Esophagus muscularis mucosa (tissue), 4 donors: ENCODE measurements at regions of chr7 and their contacts with region 1.

Region 1: DNA sequence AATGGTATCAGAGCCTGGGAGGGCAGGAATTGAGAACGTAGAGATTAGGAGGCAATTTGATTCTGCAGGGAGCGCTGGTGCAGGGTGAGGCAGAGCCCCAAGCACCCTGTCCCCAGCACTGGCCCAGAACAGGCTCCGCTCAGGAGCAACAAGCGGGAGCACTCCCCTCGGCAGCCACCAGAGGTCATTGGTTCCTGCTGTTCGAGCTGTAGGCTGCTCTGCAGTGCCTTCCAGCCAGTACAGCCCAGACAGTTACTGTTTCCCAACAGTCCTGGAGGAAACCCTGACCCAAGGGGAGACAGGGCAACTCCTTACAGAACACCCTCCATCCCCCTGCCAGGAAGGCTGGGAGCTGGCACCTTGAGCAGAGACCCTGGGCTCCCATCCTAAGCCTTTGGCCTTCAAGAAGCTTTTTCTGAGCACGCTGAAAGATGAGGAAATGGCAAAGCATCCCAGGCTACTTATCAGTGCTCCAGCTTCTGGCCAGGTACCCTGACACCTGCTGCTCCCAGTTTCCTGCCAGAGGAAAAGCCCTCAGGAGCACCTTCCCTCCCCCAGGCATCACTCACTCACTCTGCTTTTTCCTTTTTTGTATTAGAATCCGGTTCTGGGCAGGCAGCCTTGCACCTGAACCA is 71.2 kb upstream of the EFCAB10 start:
- DNase-seq: no peak
- H3K4me3 ChIP-seq: no peak overlapping the region
- H3K27ac ChIP-seq: no peak overlapping the region
- H3K4me1 ChIP-seq: peaks cover 31 to 48% (median 45%) of the 10 kb centered on the region in 4 donors
- H3K27me3 ChIP-seq: no peaks in the 10 kb centered on the region
- CTCF ChIP-seq: peak; percentile 87 to 98 (median 92)
- EP300 ChIP-seq: no peak
- POLR2A ChIP-seq: no peak

Region 2: GRCh38 chr7:105743351-105744090 is 91.0 kb after region 1 on chr7:
- intact Hi-C with region 1: loop called (anchors 5 kb)
- DNase-seq: no peak
- H3K4me3 ChIP-seq: no peak overlapping the region
- H3K27ac ChIP-seq: peak overlapping the region in 1 of 4 donors; percentile 5
- H3K4me1 ChIP-seq: peaks cover 0 to 23% (median 15%) of the 10 kb centered on the region in 4 donors
- H3K27me3 ChIP-seq: no peaks in the 10 kb centered on the region
- CTCF ChIP-seq: no peak
- EP300 ChIP-seq: no peak
- POLR2A ChIP-seq: no peak

Region 3: DNA sequence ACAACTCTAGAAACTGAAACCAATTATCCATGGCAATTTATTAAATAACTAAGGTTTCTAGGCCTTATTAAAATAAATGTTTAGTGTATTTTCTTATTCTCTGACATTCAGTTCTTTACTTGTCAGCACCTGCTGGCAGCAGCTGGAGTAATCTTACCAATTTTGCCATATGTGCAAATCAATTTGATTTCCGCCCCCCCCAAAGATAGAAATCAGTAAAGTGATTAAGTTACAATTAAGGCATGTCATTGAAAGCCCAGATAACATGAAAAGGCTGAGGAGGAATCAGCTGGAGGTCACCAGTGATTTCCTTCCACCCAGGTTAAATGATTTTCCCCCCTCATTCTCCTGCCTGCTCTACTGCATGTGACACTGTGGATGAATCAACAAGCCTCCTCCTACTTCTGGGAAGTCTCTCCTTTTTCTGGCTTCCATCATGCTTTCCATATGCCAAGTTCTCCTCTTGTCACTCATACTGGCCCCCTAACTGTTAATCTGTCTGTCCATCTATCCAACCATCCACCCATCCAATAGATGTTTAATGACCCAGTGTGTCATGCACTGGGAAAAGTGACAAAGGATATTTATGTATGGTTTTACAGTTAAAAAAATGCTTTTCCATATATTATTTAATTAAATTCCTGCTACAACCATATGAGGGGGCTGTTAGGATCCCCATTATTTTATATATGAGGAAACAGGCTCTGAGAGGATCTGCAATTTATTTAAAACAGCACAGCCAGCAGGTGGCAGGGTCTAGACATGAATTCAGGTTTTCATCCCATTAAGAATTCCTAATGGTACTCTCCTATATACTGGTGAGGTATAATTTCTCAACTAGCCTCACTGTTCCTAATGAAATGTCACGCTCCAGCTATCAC is 107.4 kb after region 1 on chr7:
- intact Hi-C with region 1: loop called (anchors 5 kb)
- DNase-seq: no peak
- H3K4me3 ChIP-seq: no peak overlapping the region
- H3K27ac ChIP-seq: no peak overlapping the region
- H3K4me1 ChIP-seq: peaks cover 0 to 16% (median 9%) of the 10 kb centered on the region in 4 donors
- H3K27me3 ChIP-seq: no peaks in the 10 kb centered on the region
- CTCF ChIP-seq: peak; percentile 59 to 61 (median 60)
- EP300 ChIP-seq: no peak
- POLR2A ChIP-seq: no peak

Region 4: DNA sequence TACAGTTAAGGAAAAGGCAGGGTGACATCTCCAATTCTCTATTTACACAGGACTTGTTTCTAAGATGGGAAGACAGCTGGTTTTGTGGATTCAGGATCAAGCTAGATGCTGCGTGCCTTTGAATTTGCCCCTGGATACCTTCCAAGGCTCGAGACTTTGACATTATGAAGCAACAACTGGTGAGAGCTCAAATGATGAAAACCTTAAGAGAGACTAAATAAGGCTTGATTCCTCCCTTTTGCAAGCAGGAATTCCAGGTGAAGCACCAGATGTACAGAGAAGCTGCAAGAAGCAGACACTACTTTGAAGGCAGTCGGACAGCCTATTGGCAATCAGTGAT is 142.9 kb after region 1 on chr7:
- intact Hi-C with region 1: no loop called
- DNase-seq: no peak
- H3K4me3 ChIP-seq: peak overlapping the region in 1 of 4 donors; percentile 22
- H3K27ac ChIP-seq: peak overlapping the region; percentile 69 to 82 (median 80)
- H3K4me1 ChIP-seq: peaks cover 21 to 48% (median 40%) of the 10 kb centered on the region in 4 donors
- H3K27me3 ChIP-seq: no peaks in the 10 kb centered on the region
- CTCF ChIP-seq: no peak
- EP300 ChIP-seq: no peak
- POLR2A ChIP-seq: no peak

Region 5: GRCh38 chr7:105876091-105876963 is 223.9 kb after region 1 on chr7 and contains the start of gene ATXN7L1:
- intact Hi-C with region 1: loop called (anchors 5 kb)
- DNase-seq: peak; percentile 97
- H3K4me3 ChIP-seq: peak within 1 kb of the TSS; percentile 66 to 84 (median 82)
- H3K27ac ChIP-seq: peak within 1 kb of the TSS; percentile 85 to 93 (median 88)
- H3K4me1 ChIP-seq: peaks cover 18 to 65% (median 44%) of the 10 kb centered on the region in 4 donors
- H3K27me3 ChIP-seq: no peaks in the 10 kb centered on the region
- CTCF ChIP-seq: peak; percentile 45 to 80 (median 75)
- EP300 ChIP-seq: peak; percentile 35
- POLR2A ChIP-seq: peak; percentile 34
- total RNA-seq, gene ATXN7L1: 4.6 to 12.5 (median 10.1) TPM

Region 6: GRCh38 chr7:106009403-106010226 is 357.1 kb after region 1 on chr7:
- intact Hi-C with region 1: loop called (anchors 10 kb)
- DNase-seq: peak; percentile 95
- H3K4me3 ChIP-seq: peak overlapping the region; percentile 12 to 46 (median 26)
- H3K27ac ChIP-seq: peak overlapping the region; percentile 69 to 84 (median 78)
- H3K4me1 ChIP-seq: peaks cover 7 to 50% (median 42%) of the 10 kb centered on the region in 4 donors
- H3K27me3 ChIP-seq: no peaks in the 10 kb centered on the region
- CTCF ChIP-seq: peak; percentile 95 to 99 (median 98)
- EP300 ChIP-seq: no peak
- POLR2A ChIP-seq: no peak

Region 7: GRCh38 chr7:106041140-106041717 is 388.8 kb after region 1 on chr7:
- intact Hi-C with region 1: loop called (anchors 2 kb)
- DNase-seq: no peak
- H3K4me3 ChIP-seq: no peak overlapping the region
- H3K27ac ChIP-seq: no peak overlapping the region
- H3K4me1 ChIP-seq: peaks cover 2 to 21% (median 16%) of the 10 kb centered on the region in 4 donors
- H3K27me3 ChIP-seq: no peaks in the 10 kb centered on the region
- CTCF ChIP-seq: peak; percentile 44 to 72 (median 49)
- EP300 ChIP-seq: no peak
- POLR2A ChIP-seq: no peak

Region 8: DNA sequence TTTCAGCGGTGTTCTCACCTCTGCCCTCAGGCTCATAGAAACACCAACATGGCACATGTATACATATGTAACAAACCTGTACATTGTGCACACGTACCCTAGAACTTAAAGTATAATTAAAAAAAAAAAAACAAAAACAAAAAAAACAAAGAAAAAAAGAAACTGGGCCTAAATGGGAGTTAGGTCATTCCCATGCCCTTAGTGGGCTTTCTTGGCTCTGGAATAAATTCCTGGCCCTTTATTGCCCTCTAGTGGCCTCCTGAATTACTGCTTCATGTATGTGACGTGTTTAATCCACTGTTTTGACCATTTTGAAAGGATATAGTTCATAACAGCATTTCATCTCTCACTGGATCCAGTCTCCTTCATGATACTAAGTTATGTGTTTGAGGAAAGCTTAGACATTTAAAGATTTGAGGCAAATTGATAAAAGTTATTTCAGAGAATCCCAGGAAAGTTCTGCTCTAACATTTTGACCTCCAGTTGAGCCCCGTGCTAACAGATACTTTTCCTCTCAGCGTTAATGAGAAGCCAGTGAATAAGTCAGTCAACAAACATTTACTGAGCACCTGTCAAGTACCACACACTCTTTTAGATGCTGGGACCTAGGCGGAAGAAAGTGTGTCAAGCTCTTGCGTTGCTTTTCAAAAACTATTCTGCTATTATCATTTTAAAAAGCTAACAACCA is 514.3 kb after region 1 on chr7:
- intact Hi-C with region 1: loop called (anchors 10 kb)
- DNase-seq: no peak
- H3K4me3 ChIP-seq: no peak overlapping the region
- H3K27ac ChIP-seq: peak overlapping the region in 1 of 4 donors; percentile 15
- H3K4me1 ChIP-seq: peaks cover 5 to 21% (median 18%) of the 10 kb centered on the region in 4 donors
- H3K27me3 ChIP-seq: no peaks in the 10 kb centered on the region
- CTCF ChIP-seq: peak; percentile 70 to 84 (median 80)
- EP300 ChIP-seq: no peak
- POLR2A ChIP-seq: no peak